WTC11 (cell line): ENCODE measurements at regions of chr17 and their contacts with region 1.

Region 1: DNA sequence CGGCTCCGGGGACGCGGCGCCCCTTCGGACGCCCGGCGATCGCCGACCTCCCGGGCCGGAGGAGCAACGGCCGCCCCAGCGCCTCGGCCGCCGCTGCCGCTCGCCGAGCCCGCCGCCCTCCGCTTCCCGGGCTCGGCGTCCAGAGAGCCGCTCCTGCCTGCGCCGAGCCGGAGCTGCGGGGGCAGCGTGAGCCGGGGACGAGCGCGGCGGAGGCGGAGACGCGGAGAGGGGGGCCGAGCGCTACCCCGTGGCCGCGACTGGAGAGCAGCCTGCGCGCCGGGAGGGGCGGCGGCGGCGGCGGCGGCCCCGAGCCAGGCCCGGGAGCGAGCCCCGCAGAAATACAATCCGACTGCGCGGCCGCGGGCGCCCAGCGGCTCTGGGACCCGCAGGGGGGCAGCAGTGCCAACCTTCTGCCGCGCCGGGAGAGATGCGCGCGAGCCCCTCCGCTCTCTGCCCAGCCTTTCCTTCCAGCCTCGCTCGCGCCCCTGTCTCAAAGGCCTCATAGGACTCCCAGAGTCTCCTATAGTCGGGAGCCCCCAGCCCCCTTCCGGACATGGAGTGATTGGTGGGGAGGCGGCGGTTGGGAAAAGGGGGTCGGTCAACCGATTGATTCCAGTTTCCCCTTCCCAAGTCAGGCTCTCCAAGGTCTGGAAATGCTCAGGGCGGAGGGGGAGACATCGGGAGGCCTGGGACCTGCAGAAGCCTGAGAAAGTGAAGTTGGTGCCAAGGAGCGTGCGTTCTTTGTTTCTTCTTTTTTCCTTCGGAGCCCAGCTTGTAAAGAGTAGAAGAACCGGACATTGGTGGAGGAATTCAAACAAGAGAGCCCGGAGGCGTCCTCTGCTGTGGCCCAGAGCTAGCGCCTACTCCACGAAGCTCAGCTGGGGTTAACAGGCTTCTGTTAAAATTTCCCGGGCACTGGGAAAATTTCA is 1.1 kb upstream of the SDK2 start:
- DNase-seq: peak; percentile 63
- ATAC-seq: peak; percentile 50
- H3K4me3 Mint-ChIP-seq: peak overlapping the region; percentile 67
- H3K27ac Mint-ChIP-seq: no peak overlapping the region
- H3K4me1 Mint-ChIP-seq: peaks cover 45% of the 10 kb centered on the region
- H3K27me3 Mint-ChIP-seq: peaks cover 74% of the 10 kb centered on the region
- CTCF ChIP-seq: no peak

Region 2: GRCh38 chr17:73478768-73479424 is 166.4 kb before region 1 on chr17:
- CTCF ChIA-PET with region 1: interaction called, 14 read pairs
- POLR2A ChIA-PET with region 1: no interaction called
- DNase-seq: peak; percentile 58
- ATAC-seq: peak; percentile 75
- H3K4me3 Mint-ChIP-seq: no peak overlapping the region
- H3K27ac Mint-ChIP-seq: peak overlapping the region; percentile 52
- H3K4me1 Mint-ChIP-seq: peaks cover 31% of the 10 kb centered on the region
- H3K27me3 Mint-ChIP-seq: peaks cover 2% of the 10 kb centered on the region; the same call in 1 of the 2 replicates
- CTCF ChIP-seq: peak; percentile 29; the same call in 1 of the 2 replicates

Region 3: DNA sequence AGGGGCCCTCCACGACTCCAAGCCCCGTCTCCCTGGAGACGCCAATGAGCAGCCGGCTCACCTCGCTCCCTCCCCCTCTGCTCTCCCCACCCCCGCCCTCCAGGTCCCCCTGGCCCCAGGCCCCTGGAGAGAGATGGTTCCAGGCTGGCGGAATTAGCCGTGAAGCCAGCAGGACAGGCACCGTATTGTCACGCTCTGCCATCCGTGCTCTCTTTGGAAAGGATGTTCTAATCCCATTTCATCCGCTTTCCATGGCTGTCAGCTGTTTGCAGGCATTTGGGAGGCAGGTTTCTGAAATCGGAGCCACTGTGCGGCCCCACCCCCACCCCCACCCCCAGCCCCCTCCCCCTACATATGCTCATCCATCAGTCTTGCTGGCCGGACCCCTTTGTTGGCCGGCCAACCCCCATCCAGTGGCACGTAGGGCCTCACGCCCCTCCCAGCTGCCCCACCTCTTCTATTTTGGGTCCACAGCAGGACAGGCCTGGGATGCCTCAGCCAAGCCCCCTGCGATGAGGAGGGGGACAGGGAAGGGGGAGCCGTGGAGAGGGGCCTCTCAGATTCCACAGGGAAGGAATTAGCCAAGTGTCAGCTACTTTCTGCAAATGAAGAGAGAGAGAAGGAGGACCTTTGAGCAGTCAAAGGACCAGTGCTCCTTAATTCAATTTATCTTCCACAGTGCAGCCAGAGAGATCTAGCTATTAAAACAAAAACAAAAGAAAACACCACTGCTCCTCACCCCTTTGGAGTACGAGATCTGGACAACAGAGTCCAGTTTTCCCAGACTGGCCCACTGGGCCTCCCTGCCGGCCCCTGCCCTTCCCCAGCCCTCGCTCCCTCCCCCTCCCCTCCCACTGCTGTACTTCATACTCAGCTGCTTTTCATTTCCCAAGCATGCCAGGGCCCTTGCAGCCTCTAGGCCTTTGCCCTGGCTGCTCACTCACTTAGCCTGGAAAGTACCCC is 31.8 kb before region 1 on chr17:
- CTCF ChIA-PET with region 1: interaction called, 14 read pairs
- POLR2A ChIA-PET with region 1: no interaction called
- DNase-seq: peak; percentile 72
- ATAC-seq: peak; percentile 70
- H3K4me3 Mint-ChIP-seq: peak overlapping the region; percentile 52
- H3K27ac Mint-ChIP-seq: peak overlapping the region; percentile 96
- H3K4me1 Mint-ChIP-seq: peaks cover 57% of the 10 kb centered on the region
- H3K27me3 Mint-ChIP-seq: no peaks in the 10 kb centered on the region
- CTCF ChIP-seq: no peak

Region 4: GRCh38 chr17:73690676-73691075 is 45.4 kb after region 1 on chr17:
- CTCF ChIA-PET with region 1: interaction called, 16 read pairs
- POLR2A ChIA-PET with region 1: no interaction called
- DNase-seq: peak; percentile 54
- ATAC-seq: peak; percentile 78
- H3K4me3 Mint-ChIP-seq: no peak overlapping the region
- H3K27ac Mint-ChIP-seq: no peak overlapping the region
- H3K4me1 Mint-ChIP-seq: peaks cover 55% of the 10 kb centered on the region
- H3K27me3 Mint-ChIP-seq: no peaks in the 10 kb centered on the region; the same call in none of the 2 replicates
- CTCF ChIP-seq: no peak

Region 5: DNA sequence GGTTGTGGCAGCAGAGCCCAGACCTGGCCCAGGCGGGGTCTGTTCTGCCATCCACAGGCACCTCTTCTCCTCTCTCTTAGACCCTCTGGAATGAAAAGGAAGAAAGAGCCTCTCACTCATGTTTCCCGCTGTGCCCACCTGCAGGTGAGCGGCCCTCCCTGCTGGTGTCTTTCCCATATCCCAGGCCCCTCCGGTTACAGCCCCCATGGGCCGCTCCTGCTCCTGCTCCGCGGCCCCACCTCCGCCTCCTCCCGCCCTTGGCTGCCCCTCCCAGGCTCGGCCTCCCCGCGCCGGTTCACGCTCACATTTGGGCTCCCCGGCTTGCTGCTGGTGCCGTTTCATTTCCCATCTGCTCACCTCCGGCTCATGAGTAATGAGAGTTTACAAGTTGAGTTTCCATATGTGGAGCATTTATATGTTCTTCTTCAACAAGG is 97.7 kb after region 1 on chr17:
- CTCF ChIA-PET with region 1: no interaction called
- POLR2A ChIA-PET with region 1: no interaction called
- DNase-seq: peak; percentile 25
- ATAC-seq: peak; percentile 60
- H3K4me3 Mint-ChIP-seq: no peak overlapping the region
- H3K27ac Mint-ChIP-seq: no peak overlapping the region
- H3K4me1 Mint-ChIP-seq: peaks cover 21% of the 10 kb centered on the region
- H3K27me3 Mint-ChIP-seq: peaks cover 18% of the 10 kb centered on the region
- CTCF ChIP-seq: no peak

Region 6: DNA sequence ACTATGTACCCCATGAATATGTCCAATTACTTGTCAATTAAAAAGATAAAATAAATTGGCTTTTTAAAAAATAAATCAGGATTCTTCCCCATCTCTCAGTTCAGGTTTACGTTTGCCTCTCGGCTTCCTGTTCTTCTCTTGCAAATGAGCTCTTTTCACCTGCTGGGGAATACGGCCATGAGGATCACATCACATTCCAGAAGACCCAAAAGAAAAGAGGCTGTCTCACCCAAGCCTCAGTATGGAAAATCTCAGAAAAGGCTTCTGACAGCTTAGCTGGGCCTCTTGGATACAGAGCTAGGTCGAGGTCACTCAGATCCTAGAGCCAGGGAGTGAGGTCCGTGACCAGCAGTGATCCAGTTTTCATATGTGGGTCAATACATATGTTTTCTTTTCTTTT is 170.2 kb after region 1 on chr17:
- CTCF ChIA-PET with region 1: interaction called, 18 read pairs
- POLR2A ChIA-PET with region 1: no interaction called
- DNase-seq: no peak
- ATAC-seq: peak; percentile 79
- H3K4me3 Mint-ChIP-seq: no peak overlapping the region
- H3K27ac Mint-ChIP-seq: no peak overlapping the region
- H3K4me1 Mint-ChIP-seq: peaks cover 26% of the 10 kb centered on the region
- H3K27me3 Mint-ChIP-seq: peaks cover 23% of the 10 kb centered on the region
- CTCF ChIP-seq: no peak

Region 7: GRCh38 chr17:73952480-73953205 is 307.3 kb after region 1 on chr17:
- CTCF ChIA-PET with region 1: interaction called, 14 read pairs
- POLR2A ChIA-PET with region 1: no interaction called
- DNase-seq: peak; percentile 65
- ATAC-seq: peak; percentile 45
- H3K4me3 Mint-ChIP-seq: no peak overlapping the region
- H3K27ac Mint-ChIP-seq: no peak overlapping the region
- H3K4me1 Mint-ChIP-seq: peaks cover 5% of the 10 kb centered on the region
- H3K27me3 Mint-ChIP-seq: peaks cover 39% of the 10 kb centered on the region
- CTCF ChIP-seq: 0 out of 2 replicates have a peak, but pooled peaks have one; percentile 28